Activated B cell treated with CpG ODN at 0.5 μM for 24 hours (primary cell): ENCODE measurements at regions of chr5 and their contacts with region 1.

Region 1: GRCh38 chr5:33440482-33441240 is at the start of gene TARS1:
- DNase-seq: peak; percentile 89
- ATAC-seq: peak; percentile 95
- H3K4me3 Mint-ChIP-seq: no peak within 1 kb of the TSS
- H3K27ac Mint-ChIP-seq: no peak within 1 kb of the TSS
- H3K4me1 Mint-ChIP-seq: peaks cover 21% of the 10 kb centered on the region
- H3K27me3 Mint-ChIP-seq: no peaks in the 10 kb centered on the region
- CTCF ChIP-seq: no peak
- total RNA-seq, gene TARS1: 176 and 180 TPM in 2 replicates

Region 2: GRCh38 chr5:31531888-31532710 is 1908.6 kb before region 1 on chr5 and contains the starts of genes C5orf22 and DROSHA:
- CTCF ChIA-PET with region 1: no interaction called
- POLR2A ChIA-PET with region 1: interaction called, 3 read pairs
- intact Hi-C with region 1: loop called (anchors 5 kb)
- DNase-seq: peak; percentile 81
- ATAC-seq: peak; percentile 98
- H3K4me3 Mint-ChIP-seq: peak within 1 kb of the TSS; percentile 99
- H3K27ac Mint-ChIP-seq: peak within 1 kb of the TSS; percentile 92
- H3K4me1 Mint-ChIP-seq: peaks cover 43% of the 10 kb centered on the region
- H3K27me3 Mint-ChIP-seq: no peaks in the 10 kb centered on the region
- CTCF ChIP-seq: no peak
- total RNA-seq, gene C5orf22: 27.0 and 27.1 TPM in 2 replicates
- total RNA-seq, gene DROSHA: 53.8 and 59.8 TPM in 2 replicates

Region 3: DNA sequence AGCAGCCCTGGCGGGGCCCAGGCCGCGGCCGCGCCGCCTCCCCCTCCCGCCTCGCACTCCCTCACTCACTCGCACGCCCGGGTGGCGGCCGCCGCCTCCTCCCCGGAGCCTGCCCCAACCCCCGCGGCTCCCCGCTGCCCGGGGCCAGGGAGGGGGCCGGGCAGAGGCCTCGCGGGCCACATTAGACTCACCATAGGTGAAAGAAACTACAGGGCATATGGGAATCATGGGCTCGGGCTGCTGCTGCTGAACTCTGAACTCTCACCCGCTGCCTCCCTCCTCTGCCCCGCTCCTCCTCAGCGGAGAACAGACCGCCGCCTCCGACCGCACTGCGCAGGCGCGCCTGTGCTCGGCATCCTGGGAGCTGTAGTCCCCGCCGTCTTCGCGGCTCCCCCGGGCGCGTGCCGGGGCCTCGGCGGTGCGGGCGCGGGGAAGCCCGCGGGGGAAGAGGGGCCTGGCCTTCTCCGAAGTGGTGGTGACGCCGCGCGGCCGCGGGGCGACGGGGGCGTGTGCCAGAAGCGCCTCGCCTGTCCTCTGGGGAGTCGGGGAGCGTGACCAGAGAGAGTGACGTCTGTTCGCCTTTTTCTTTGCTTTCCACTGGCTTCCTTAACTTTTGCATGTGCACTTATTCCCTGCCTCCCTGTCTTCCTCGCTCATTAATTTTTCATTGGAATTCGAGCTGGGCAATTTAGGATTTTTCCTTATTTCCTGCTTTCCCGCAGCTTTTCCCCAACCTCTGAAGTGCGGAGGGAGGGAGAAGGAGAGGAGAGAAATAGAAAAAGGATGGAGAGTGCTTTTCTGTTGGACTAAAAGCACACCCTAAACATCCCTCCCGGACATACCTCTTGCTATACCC is 996.0 kb before region 1 on chr5 and contains the start of gene ZFR:
- CTCF ChIA-PET with region 1: no interaction called
- POLR2A ChIA-PET with region 1: no interaction called
- intact Hi-C with region 1: loop called (anchors 5 kb)
- DNase-seq: peak; percentile 90
- ATAC-seq: peak; percentile 85
- H3K4me3 Mint-ChIP-seq: peak within 1 kb of the TSS; percentile 92
- H3K27ac Mint-ChIP-seq: peak within 1 kb of the TSS; percentile 92
- H3K4me1 Mint-ChIP-seq: peaks cover 60% of the 10 kb centered on the region
- H3K27me3 Mint-ChIP-seq: no peaks in the 10 kb centered on the region
- CTCF ChIP-seq: no peak
- total RNA-seq, gene ZFR: 60.2 and 64.3 TPM in 2 replicates

Region 4: DNA sequence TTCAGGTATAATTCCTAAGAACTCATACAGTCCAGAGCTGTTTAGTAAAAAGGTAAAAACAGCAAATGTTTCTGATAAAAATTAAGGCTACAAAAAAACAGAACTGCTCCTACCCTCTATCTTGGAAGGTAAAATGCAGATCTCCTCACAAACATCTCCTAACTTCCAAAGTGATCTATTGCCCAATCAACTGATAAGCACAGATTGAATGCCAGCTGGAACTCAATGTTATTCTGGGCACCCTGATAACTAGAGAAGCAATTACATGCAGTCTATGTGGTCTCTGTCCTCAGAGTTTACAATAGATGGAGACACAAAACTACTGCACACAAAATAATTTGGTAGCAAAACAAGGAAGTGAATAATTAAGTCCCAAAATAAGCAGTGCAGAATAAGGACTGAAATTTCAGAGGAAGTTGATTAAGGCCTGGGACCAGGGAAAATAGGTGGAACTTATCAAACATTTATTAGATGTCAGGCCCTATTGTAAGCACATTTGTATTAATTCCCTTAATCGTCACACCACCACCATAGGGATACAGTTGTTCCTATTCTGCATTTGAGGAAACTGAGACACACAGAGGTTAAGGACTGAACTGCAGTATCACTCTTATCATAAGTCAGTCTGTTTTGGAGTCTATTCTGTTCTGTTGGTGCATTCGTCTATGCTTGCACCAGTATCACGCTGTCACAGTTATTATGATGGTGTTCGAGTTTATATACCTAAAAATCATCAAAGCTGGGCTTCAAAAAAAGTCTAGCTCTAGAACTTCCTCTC is 102.1 kb before region 1 on chr5:
- CTCF ChIA-PET with region 1: no interaction called
- POLR2A ChIA-PET with region 1: no interaction called
- intact Hi-C with region 1: no loop called
- DNase-seq: no peak
- ATAC-seq: no peak
- H3K4me3 Mint-ChIP-seq: no peak overlapping the region
- H3K27ac Mint-ChIP-seq: no peak overlapping the region
- H3K4me1 Mint-ChIP-seq: no peaks in the 10 kb centered on the region
- H3K27me3 Mint-ChIP-seq: peaks cover 3% of the 10 kb centered on the region
- CTCF ChIP-seq: no peak

Region 5: GRCh38 chr5:33460210-33460609 is 19.5 kb after region 1 on chr5:
- CTCF ChIA-PET with region 1: no interaction called
- POLR2A ChIA-PET with region 1: no interaction called
- intact Hi-C with region 1: no loop called
- DNase-seq: no peak
- ATAC-seq: no peak
- H3K4me3 Mint-ChIP-seq: no peak overlapping the region
- H3K27ac Mint-ChIP-seq: no peak overlapping the region
- H3K4me1 Mint-ChIP-seq: no peaks in the 10 kb centered on the region
- H3K27me3 Mint-ChIP-seq: no peaks in the 10 kb centered on the region
- CTCF ChIP-seq: no peak

Region 6: GRCh38 chr5:33936004-33936380 is 495.3 kb after region 1 on chr5:
- CTCF ChIA-PET with region 1: interaction called, 54 read pairs
- POLR2A ChIA-PET with region 1: interaction called, 5 read pairs
- intact Hi-C with region 1: loop called (anchors 1 kb)
- DNase-seq: peak; percentile 31
- ATAC-seq: no peak
- H3K4me3 Mint-ChIP-seq: no peak overlapping the region
- H3K27ac Mint-ChIP-seq: no peak overlapping the region
- H3K4me1 Mint-ChIP-seq: peaks cover 17% of the 10 kb centered on the region
- H3K27me3 Mint-ChIP-seq: peaks cover 43% of the 10 kb centered on the region
- CTCF ChIP-seq: no peak

Region 7: GRCh38 chr5:33969572-33970452 is 529.2 kb after region 1 on chr5:
- CTCF ChIA-PET with region 1: interaction called, 14 read pairs
- POLR2A ChIA-PET with region 1: no interaction called
- intact Hi-C with region 1: loop called (anchors 1 kb)
- DNase-seq: no peak
- ATAC-seq: peak; percentile 42
- H3K4me3 Mint-ChIP-seq: no peak overlapping the region
- H3K27ac Mint-ChIP-seq: no peak overlapping the region
- H3K4me1 Mint-ChIP-seq: no peaks in the 10 kb centered on the region
- H3K27me3 Mint-ChIP-seq: peaks cover 5% of the 10 kb centered on the region
- CTCF ChIP-seq: no peak

Region 8: DNA sequence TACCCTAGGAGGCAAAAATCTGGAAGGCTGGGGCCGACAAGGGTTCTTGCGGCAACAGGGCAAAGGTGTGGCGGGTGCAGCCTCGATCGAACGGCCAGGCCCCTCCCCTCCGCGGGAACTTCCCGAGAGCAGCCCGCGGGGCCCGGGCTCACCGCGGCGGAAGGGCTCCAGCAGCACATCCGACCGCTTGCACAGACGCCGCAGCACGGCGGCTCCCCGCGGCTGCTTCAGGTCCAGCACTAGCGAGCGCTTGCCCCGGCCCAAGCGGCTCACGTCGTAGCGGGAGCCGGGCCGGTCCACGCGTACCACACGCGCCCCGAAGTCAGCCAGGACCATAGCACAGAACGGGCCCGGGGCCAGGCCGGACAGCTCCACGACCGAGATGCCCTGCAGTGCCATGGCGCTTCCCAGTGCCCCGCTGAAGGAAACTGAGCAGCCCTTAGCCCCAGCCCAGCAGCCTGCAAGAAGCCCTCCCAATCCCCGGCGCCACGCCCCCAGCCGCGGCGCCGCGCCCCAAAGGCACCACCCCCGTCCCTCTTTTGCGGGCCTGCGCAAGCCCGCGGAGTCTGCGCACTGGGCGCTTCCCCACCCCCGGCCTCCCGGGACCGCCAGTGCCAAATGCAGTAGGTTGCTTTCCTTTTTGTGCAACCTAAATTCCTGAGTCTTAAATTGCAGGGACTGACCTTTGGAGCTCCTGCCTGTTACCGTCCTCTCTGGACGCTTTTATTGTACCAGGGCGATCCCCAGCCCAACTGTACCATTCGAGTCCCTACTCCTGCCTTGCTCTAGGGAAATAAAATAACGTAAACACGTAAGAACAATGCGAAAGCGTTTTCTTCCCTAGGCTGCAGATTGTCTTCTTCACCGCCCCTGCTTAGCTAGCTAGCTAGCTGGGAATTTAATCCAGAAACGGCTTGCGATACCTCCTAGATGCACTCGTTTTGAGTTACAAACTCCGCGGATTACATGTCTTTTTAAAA is 567.2 kb after region 1 on chr5 and contains the start of gene AMACR:
- CTCF ChIA-PET with region 1: interaction called, 3 read pairs
- POLR2A ChIA-PET with region 1: interaction called, 8 read pairs
- intact Hi-C with region 1: loop called (anchors 1 kb)
- DNase-seq: peak; percentile 90
- ATAC-seq: peak; percentile 92
- H3K4me3 Mint-ChIP-seq: peak within 1 kb of the TSS; percentile 95
- H3K27ac Mint-ChIP-seq: peak within 1 kb of the TSS; percentile 91
- H3K4me1 Mint-ChIP-seq: peaks cover 23% of the 10 kb centered on the region
- H3K27me3 Mint-ChIP-seq: no peaks in the 10 kb centered on the region
- CTCF ChIP-seq: no peak
- total RNA-seq, gene AMACR: 6.0 and 6.5 TPM in 2 replicates